GM10248 (cell line): ENCODE measurements at regions of chr14 and their contacts with region 1.

Region 1: GRCh38 chr14:60248697-60249318 is at the start of gene PPM1A:
- DNase-seq: peak; percentile 96
- CTCF ChIP-seq: no peak

Region 2: DNA sequence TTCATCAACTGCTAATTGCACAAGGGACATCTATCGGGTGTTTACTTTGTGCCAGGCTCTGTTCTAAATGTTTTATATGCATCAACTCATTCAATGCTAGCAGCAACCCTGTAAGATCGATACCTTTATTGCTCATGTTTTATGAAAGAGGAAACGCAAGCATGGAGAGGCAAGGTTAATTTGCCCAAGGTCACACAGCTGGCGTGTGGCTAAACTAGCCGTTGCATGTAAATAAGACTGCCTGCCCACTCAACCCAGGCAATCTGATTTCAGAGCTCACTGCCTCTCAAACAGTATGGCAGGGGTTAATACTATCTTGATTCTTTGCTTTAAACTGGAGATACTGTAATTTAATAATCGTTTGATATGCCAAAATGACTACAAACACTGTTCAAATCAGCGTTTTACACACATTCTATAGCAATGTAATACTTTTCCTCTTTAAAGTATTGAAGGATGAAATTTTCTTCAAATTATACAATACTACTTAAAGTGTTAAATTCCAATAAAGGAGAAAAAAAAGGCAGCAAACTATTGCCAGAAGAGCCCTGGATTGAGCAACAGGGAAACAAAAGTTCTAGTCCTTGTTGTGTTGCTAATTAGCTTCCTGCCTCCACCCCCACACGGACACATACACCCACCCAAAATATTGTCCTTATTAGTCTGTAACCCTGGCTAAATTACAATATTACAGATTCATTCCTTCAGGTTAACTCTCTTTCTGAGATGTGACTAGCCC is 44.5 kb before region 1 on chr14:
- CTCF ChIA-PET with region 1: interaction called, 8 read pairs
- POLR2A ChIA-PET with region 1: interaction called, 26 read pairs
- DNase-seq: no peak
- CTCF ChIP-seq: no peak

Region 3: DNA sequence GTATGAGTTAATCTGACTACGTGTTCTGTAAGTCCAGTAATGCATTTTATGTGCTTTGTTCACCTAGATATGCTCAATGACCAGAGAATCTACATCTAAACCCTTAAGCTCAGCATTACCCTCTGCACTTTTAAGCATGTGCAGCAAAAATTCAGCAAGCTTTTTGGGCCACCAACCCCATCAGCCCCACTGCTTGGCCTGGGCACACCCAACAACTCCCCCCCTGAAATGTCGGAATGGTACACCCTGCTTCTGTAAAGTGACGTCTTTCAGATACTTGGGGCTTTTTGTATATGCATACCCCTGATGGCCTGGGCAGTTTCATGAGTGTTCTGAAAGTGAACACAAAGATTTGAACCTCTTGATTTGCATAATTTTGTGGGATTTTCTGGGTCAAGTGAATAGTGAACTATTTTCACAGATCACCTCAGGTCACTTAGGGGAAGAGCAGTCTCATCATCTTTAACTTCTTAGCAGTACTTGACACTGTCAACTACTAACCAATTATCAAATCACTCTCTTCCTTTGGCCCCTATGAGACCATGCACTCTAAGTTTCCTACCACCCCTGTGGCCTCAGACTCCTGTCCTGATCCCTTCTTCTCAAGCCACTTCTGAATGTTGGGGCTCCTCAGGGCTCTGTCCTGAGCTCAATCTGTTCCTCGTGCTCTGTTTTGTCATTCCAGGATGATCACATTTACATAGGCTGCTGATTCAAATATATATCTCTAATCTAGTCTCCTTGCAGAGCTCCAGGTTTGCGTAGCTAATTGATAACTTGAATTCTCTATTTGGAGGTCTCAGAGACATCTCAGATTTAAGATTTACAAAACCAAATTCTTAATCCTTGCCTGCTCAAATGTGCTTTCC is 36.1 kb before region 1 on chr14:
- CTCF ChIA-PET with region 1: interaction called, 52 read pairs
- POLR2A ChIA-PET with region 1: interaction called, 26 read pairs
- DNase-seq: peak; percentile 43
- CTCF ChIP-seq: no peak

Region 4: GRCh38 chr14:60266021-60266937 is 17.5 kb after region 1 on chr14:
- CTCF ChIA-PET with region 1: no interaction called
- POLR2A ChIA-PET with region 1: no interaction called
- DNase-seq: no peak
- CTCF ChIP-seq: no peak